Activated T-helper 1 cell treated with anti-CD3 and anti-CD28 coated beads, Interleukin-12 subunit alpha, Interleukin-12 subunit beta, Interleukin-2, Interleukin-4 antibody, amounts not matched to agents 30 ng/mL and 10 ng/mL and 1 ng/mL, durations not matched to agents 14 hours and 24 hours and 36 hours (primary cell): ENCODE measurements at regions of chr2 and their contacts with region 1.

Region 1: GRCh38 chr2:8539743-8540551 is 141.9 kb upstream of the ID2 start:
- DNase-seq: no peak
- H3K4me3 Mint-ChIP-seq: peak overlapping the region; percentile 76
- H3K27ac Mint-ChIP-seq: peak overlapping the region; percentile 95
- H3K4me1 Mint-ChIP-seq: peaks cover 83% of the 10 kb centered on the region
- H3K27me3 Mint-ChIP-seq: no peaks in the 10 kb centered on the region

Region 2: GRCh38 chr2:8525582-8526402 is 14.2 kb before region 1 on chr2:
- intact Hi-C with region 1: loop called (anchors 1 kb)
- DNase-seq: no peak
- H3K4me3 Mint-ChIP-seq: no peak overlapping the region
- H3K27ac Mint-ChIP-seq: peak overlapping the region; percentile 32
- H3K4me1 Mint-ChIP-seq: peaks cover 55% of the 10 kb centered on the region
- H3K27me3 Mint-ChIP-seq: no peaks in the 10 kb centered on the region

Region 3: GRCh38 chr2:8693155-8693821 is 153.3 kb after region 1 on chr2:
- intact Hi-C with region 1: no loop called
- DNase-seq: no peak
- H3K4me3 Mint-ChIP-seq: no peak overlapping the region
- H3K27ac Mint-ChIP-seq: no peak overlapping the region
- H3K4me1 Mint-ChIP-seq: no peaks in the 10 kb centered on the region
- H3K27me3 Mint-ChIP-seq: peaks cover 26% of the 10 kb centered on the region

Region 4: GRCh38 chr2:10477443-10478297 is 1937.7 kb after region 1 on chr2:
- intact Hi-C with region 1: no loop called
- DNase-seq: no peak
- H3K4me3 Mint-ChIP-seq: no peak overlapping the region
- H3K27ac Mint-ChIP-seq: no peak overlapping the region
- H3K4me1 Mint-ChIP-seq: peaks cover 12% of the 10 kb centered on the region
- H3K27me3 Mint-ChIP-seq: peaks cover 9% of the 10 kb centered on the region